ENCODE measurements at regions of chr2 and their contacts with region 1.

Region 1: DNA sequence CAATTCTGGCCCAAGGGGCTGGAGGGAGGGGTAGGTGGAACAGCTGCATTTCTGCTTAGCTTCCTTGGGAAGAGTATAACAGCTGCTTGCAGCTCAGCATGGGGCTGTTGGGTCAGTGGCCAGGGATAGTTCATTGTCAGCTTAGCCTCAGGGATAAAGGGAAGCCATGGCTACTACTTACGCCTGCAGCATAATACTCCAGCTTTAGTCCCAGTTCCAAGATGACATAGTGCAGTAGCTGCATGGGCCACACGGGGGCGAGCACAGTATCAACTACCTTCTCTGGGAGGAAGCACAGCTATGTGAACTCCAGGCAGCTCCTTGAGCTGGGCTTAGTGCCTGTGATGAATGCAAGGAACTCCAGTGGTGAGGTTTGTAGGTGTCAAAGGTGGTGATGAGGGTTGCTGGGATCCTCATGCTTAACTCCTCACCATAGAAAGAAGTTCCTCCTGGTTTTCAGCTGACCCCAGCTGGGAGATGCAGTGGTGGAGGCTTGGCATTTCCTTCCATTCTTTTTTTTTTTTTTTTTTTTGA is 35.4 kb upstream of the RHOB start:
- DNase-seq: peak; percentile 61
- ATAC-seq: peak; percentile 100
- H3K4me3 ChIP-seq: no peak overlapping the region
- H3K27ac ChIP-seq: no peak overlapping the region
- H3K4me1 ChIP-seq: peaks cover 0 to 2% of the 10 kb centered on the region in 2 experiments; a peak in 1 of 4 replicates
- H3K27me3 ChIP-seq: no peaks in the 10 kb centered on the region
- CTCF ChIP-seq: peak; percentile 73 to 87 (median 82)
- POLR2A ChIP-seq: no peak
- RAD21 ChIP-seq: peak; percentile 77

Region 2: GRCh38 chr2:20424300-20425290 is 13.2 kb after region 1 on chr2:
- CTCF ChIA-PET with region 1: interaction called, 11 read pairs
- POLR2A ChIA-PET with region 1: interaction called, 3 read pairs
- RAD21 ChIA-PET with region 1: interaction called in 1 of 2 experiments, 3 read pairs
- intact Hi-C with region 1: no loop called
- DNase-seq: no peak
- ATAC-seq: no peak
- H3K4me3 ChIP-seq: no peak overlapping the region
- H3K27ac ChIP-seq: no peak overlapping the region
- H3K4me1 ChIP-seq: peaks cover 0 to 4% of the 10 kb centered on the region in 2 experiments; a peak in 2 of 4 replicates
- H3K27me3 ChIP-seq: no peaks in the 10 kb centered on the region
- CTCF ChIP-seq: no peak
- POLR2A ChIP-seq: no peak
- RAD21 ChIP-seq: no peak

Region 3: DNA sequence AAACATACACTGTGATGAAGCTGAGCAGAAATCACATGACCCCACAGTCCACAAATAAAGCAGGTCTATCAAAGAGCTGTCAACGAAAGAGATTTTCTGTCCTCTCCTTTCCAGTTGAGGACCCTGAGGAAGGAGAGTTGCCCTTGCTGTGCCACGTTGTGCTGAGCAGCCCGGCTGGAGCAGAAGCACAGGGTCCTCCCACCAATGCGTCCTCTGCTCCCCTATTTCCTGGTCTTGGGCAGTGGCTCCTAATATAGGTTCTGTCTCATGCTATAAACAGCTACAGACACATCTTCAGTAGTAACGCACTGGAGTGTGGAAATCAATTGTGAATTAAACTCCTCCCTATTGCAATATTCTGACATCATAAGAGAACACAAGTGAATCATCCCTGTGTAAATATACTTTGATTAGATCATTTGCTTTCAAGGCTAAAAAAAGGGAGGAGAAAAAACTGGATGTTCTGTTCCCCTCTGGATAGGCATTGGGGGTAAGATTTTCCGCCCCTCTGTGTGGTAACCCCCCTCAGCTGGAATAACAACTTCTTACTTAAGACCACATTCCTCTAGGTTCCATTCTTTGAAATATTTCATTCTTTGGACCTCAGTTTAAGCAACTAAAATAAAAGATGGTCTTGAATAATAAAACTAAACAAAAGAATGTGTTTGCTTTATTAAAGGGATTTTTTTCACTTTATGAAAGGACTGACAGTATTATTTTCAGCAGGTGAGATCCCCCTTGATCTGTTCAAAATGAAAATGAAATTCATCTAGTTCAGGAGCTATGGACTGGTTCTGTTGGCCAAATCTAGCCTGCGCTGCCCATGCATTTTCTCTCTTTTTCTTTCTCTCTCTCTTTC is 27.1 kb after region 1 on chr2:
- CTCF ChIA-PET with region 1: interaction called, 53 read pairs
- POLR2A ChIA-PET with region 1: interaction called, 11 read pairs
- RAD21 ChIA-PET with region 1: interaction called in 1 of 2 experiments, 4 read pairs
- intact Hi-C with region 1: no loop called
- DNase-seq: no peak
- ATAC-seq: 0 out of 2 replicates have a peak, but pooled peaks have one; percentile 1
- H3K4me3 ChIP-seq: peak overlapping the region; percentile 19 to 25
- H3K27ac ChIP-seq: no peak overlapping the region
- H3K4me1 ChIP-seq: peaks cover 26 to 43% of the 10 kb centered on the region in 2 experiments
- H3K27me3 ChIP-seq: no peaks in the 10 kb centered on the region
- CTCF ChIP-seq: no peak
- POLR2A ChIP-seq: no peak
- RAD21 ChIP-seq: no peak

Region 4: GRCh38 chr2:20635675-20636584 is 224.5 kb after region 1 on chr2:
- CTCF ChIA-PET with region 1: interaction called, 36 read pairs
- POLR2A ChIA-PET with region 1: no interaction called
- RAD21 ChIA-PET with region 1: interaction called, 7 to 8 read pairs
- intact Hi-C with region 1: loop called (anchors 1 kb)
- DNase-seq: peak; percentile 21
- ATAC-seq: peak; percentile 98
- H3K4me3 ChIP-seq: no peak overlapping the region
- H3K27ac ChIP-seq: no peak overlapping the region
- H3K4me1 ChIP-seq: peaks cover 9 to 18% of the 10 kb centered on the region in 2 experiments; a peak in 3 of 4 replicates
- H3K27me3 ChIP-seq: no peaks in the 10 kb centered on the region
- CTCF ChIP-seq: peak; percentile 92 to 96 (median 94)
- POLR2A ChIP-seq: no peak
- RAD21 ChIP-seq: peak; percentile 100